ENCODE measurements at regions of chr14 and their contacts with region 1.

Region 1: DNA sequence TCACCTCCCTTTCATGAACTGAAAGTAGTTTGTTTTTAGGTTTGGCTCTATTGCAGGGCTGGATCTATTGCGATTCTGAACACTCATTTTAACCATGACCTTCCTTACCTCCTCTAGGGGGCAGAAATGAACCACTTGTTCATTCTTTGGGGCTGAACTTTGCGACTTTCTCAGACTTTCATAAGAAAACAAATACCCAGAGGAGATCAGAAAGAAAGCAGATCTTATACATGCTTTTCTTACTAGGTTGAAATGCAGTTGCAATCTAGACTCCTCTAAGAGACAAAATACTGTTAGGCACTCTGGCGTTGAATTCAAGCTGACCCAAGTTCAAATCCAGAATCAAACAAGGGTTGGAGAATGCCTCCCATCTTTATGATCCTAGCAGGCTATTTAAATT is 32.6 kb upstream of the PLEKHG3 start:
- DNase-seq: peak; percentile 60
- ATAC-seq: peak; percentile 87
- H3K4me3 ChIP-seq: no peak overlapping the region
- H3K27ac ChIP-seq: no peak overlapping the region
- H3K4me1 ChIP-seq: peaks cover 0 to 7% of the 10 kb centered on the region in 2 experiments; a peak in 2 of 4 replicates
- H3K27me3 ChIP-seq: no peaks in the 10 kb centered on the region
- CTCF ChIP-seq: peak; percentile 68 to 91 (median 75)
- POLR2A ChIP-seq: no peak
- RAD21 ChIP-seq: peak; percentile 94

Region 2: GRCh38 chr14:64369201-64369600 is 302.4 kb before region 1 on chr14:
- CTCF ChIA-PET with region 1: no interaction called
- POLR2A ChIA-PET with region 1: no interaction called
- RAD21 ChIA-PET with region 1: no interaction called
- intact Hi-C with region 1: no loop called
- DNase-seq: no peak
- ATAC-seq: no peak
- H3K4me3 ChIP-seq: no peak overlapping the region
- H3K27ac ChIP-seq: no peak overlapping the region
- H3K4me1 ChIP-seq: peaks cover 11 to 27% of the 10 kb centered on the region in 2 experiments; a peak in 3 of 4 replicates
- H3K27me3 ChIP-seq: no peaks in the 10 kb centered on the region
- CTCF ChIP-seq: no peak
- POLR2A ChIP-seq: no peak
- RAD21 ChIP-seq: no peak

Region 3: GRCh38 chr14:64478634-64479250 is 192.8 kb before region 1 on chr14:
- CTCF ChIA-PET with region 1: no interaction called
- POLR2A ChIA-PET with region 1: no interaction called
- RAD21 ChIA-PET with region 1: no interaction called
- intact Hi-C with region 1: no loop called
- DNase-seq: no peak
- ATAC-seq: no peak
- H3K4me3 ChIP-seq: no peak overlapping the region
- H3K27ac ChIP-seq: no peak overlapping the region
- H3K4me1 ChIP-seq: no peaks in the 10 kb centered on the region
- H3K27me3 ChIP-seq: no peaks in the 10 kb centered on the region
- CTCF ChIP-seq: peak; percentile 21 to 38 (median 30); a peak in 3 of 6 replicates
- POLR2A ChIP-seq: no peak
- RAD21 ChIP-seq: peak; percentile 55

Region 4: GRCh38 chr14:64764641-64765520 is 93.3 kb after region 1 on chr14:
- CTCF ChIA-PET with region 1: interaction called, 10 read pairs
- POLR2A ChIA-PET with region 1: no interaction called
- RAD21 ChIA-PET with region 1: interaction called, 4 to 7 read pairs
- intact Hi-C with region 1: loop called (anchors 1 kb)
- DNase-seq: peak; percentile 44
- ATAC-seq: peak; percentile 64
- H3K4me3 ChIP-seq: no peak overlapping the region
- H3K27ac ChIP-seq: no peak overlapping the region
- H3K4me1 ChIP-seq: peaks cover 33 to 60% of the 10 kb centered on the region in 2 experiments
- H3K27me3 ChIP-seq: no peaks in the 10 kb centered on the region
- CTCF ChIP-seq: peak; percentile 72 to 96 (median 79); a peak in 5 of 6 replicates
- POLR2A ChIP-seq: no peak
- RAD21 ChIP-seq: peak; percentile 85

Region 5: DNA sequence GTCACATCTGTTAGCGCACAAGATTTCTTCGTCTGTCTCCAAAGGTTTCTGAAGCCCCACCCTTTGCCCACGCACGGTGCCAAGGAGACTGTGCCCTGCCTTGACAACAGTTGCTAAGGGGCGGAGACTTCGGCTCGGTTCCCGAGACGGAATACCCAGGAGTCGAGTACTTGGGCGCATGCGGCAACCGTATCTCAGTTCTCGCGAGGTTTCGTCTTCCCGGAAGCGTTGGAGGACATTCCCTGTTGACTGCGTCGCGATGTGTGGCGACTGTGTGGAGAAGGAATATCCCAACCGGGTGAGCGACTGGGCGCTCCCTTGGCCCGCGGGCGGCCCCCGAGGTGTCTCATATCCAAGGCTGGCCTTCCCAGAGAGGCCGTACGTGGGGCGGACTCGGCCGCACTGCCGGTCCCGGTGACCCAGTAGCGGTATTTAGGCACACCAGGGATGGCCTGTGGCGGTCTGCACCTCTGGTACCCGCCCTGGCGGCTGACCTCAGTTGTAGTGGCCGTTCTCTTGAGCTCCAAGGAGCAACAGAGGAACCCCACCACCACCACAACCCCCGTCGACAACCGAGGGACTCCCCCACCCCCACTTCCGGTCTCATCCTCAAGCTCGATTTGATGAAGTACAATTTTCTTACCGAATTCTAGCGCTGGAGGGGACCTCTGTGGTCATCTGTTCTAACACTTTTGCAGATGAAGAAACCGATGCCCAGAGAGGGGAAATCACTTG is 242.8 kb after region 1 on chr14 and contains the start of gene CHURC1:
- CTCF ChIA-PET with region 1: interaction called, 5 read pairs
- POLR2A ChIA-PET with region 1: no interaction called
- RAD21 ChIA-PET with region 1: no interaction called
- intact Hi-C with region 1: loop called (anchors 5 kb)
- DNase-seq: peak; percentile 98
- ATAC-seq: peak; percentile 98
- H3K4me3 ChIP-seq: peak within 1 kb of the TSS; percentile 81 to 97
- H3K27ac ChIP-seq: peak within 1 kb of the TSS; percentile 79
- H3K4me1 ChIP-seq: peaks cover 8 to 16% of the 10 kb centered on the region in 2 experiments; a peak in 3 of 4 replicates
- H3K27me3 ChIP-seq: no peaks in the 10 kb centered on the region
- CTCF ChIP-seq: no peak
- POLR2A ChIP-seq: peak; percentile 71
- RAD21 ChIP-seq: no peak
- total RNA-seq, gene CHURC1: 47.5 TPM